Psoas muscle (tissue), 8 donors: ENCODE measurements at regions of chr19 and their contacts with region 1.

Region 1: DNA sequence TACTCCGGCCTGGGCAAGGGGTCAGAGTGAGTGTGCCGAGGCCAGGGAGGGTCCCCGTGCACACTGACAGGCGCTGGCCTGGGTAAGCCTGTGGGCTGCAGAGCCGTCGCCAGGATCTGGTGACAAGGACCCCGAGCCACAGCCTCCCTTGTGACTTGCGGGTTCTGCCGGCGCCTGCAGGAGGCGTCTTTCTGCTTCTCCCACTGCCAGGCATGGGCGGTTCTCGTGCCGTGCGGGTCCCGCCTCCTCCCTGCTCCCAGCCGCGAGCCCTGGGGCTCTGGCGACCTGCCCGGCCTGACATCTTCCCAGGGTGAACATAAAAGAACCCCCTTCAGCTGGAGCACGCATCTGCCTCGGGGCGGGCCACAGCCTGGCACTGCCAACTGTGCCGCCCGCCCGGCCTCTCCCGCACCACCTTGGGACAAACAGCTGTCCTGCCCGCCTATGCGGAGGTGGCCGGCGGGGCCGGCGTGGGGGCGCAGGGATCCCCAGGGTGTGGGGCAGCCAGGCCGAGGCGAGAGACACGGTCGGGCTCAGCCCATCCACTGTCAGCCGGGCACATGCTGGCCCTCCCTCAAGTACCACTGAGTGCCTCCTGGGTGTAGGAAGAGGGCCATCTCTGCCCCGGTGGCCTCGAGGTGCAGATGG is 1.5 kb upstream of the HCN2 start:
- DNase-seq: peak in 1 of 2 donors; percentile 61
- ATAC-seq: peak in 1 of 4 donors; percentile 9
- H3K4me3 ChIP-seq: no peak overlapping the region
- H3K27ac ChIP-seq: no peak overlapping the region
- H3K4me1 ChIP-seq: peaks cover 5% of the 10 kb centered on the region
- H3K27me3 ChIP-seq: peaks cover 0 to 40% (median 20%) of the 10 kb centered on the region in 3 donors
- CTCF ChIP-seq: no peak

Region 2: DNA sequence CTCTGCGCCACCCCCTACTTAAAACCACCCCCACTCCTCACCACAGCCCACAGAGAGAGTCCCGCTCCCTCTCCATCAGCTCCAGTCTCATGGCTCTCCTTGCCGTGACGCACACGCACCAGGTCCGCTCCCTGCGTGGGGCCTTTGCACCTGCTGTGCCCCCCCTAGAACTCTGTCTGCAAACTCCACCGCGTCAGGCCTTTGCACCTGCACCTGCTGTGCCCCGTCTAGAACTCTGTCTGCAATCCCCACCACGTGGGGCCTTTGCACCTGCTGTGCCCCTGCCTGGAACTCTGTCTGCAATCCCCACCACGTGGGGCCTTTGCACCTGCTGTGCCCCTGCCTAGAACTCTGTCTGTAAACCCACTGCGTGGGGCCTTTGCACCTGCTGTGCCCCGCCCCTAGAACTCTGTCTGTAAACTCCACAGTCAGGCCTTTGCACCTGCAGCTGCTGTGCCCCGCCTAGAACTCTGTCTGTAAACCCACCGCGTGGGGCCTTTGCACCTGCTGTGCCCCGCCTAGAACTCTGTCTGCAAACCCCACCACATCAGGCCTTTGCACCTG is 131.6 kb before region 1 on chr19:
- intact Hi-C with region 1: no loop called
- DNase-seq: peak in 1 of 2 donors; percentile 18
- ATAC-seq: no peak
- H3K4me3 ChIP-seq: no peak overlapping the region
- H3K27ac ChIP-seq: no peak overlapping the region
- H3K4me1 ChIP-seq: no peaks in the 10 kb centered on the region
- H3K27me3 ChIP-seq: peaks cover 0 to 11% (median 1%) of the 10 kb centered on the region in 3 donors
- CTCF ChIP-seq: no peak

Region 3: GRCh38 chr19:566403-566802 is 21.8 kb before region 1 on chr19:
- intact Hi-C with region 1: no loop called
- DNase-seq: no peak
- ATAC-seq: no peak
- H3K4me3 ChIP-seq: no peak overlapping the region
- H3K27ac ChIP-seq: no peak overlapping the region
- H3K4me1 ChIP-seq: peaks cover 5% of the 10 kb centered on the region
- H3K27me3 ChIP-seq: no peaks in the 10 kb centered on the region
- CTCF ChIP-seq: no peak

Region 4: DNA sequence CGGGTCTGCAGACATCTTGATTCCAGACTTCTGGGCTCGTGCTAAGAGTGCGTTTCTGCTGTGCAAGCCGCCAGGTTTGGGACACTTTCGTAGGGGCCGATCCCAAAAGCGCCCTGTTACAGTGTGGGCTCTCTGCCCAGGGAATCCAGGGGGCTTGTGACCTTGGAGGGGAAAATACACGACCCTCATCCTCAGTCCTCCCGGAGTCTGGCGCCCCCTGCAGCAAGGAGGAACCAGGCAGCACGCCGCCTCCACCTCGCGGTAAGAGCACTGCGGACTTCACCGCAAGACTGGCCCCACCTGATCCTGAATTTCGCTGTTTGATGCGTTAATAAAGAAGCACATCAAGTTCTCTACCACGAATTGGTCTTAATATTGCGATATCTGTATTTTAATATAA is 39.9 kb after region 1 on chr19:
- intact Hi-C with region 1: loop called in 1 of 2 experiments (anchors 5 kb)
- DNase-seq: no peak
- ATAC-seq: no peak
- H3K4me3 ChIP-seq: no peak overlapping the region
- H3K27ac ChIP-seq: no peak overlapping the region
- H3K4me1 ChIP-seq: peaks cover 9% of the 10 kb centered on the region
- H3K27me3 ChIP-seq: no peaks in the 10 kb centered on the region
- CTCF ChIP-seq: no peak

Region 5: DNA sequence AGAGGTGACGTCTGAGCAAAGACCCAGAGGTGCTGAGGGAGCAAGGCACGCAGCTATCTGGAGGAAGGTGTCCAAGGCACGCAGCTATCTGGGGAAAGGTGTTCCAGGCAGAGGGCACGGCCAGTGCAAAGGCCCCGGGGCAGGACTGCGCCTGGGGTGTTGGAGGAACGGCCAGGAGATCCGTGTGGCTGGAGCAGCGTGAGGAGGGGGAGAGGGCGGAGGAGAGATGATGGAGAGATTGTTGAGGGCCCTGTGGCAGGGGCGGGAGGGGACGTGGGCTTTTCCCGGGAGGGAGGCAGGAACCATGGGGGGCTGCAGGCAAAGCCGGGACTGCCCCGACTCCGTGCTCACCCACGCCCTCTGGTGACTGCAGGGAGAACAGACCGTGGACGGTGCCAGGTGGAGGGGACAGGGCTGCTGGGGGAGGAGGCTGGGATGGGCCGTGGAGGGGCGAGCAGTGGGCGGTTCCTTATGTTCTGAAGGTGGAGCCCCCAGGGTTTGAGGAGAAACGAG is 149.4 kb after region 1 on chr19:
- intact Hi-C with region 1: loop called in 1 of 2 experiments (anchors 10 kb)
- DNase-seq: peak in 1 of 2 donors; percentile 51
- ATAC-seq: peak in 3 of 4 donors; percentile 61 to 67 (median 66)
- H3K4me3 ChIP-seq: no peak overlapping the region
- H3K27ac ChIP-seq: no peak overlapping the region
- H3K4me1 ChIP-seq: no peaks in the 10 kb centered on the region
- H3K27me3 ChIP-seq: peaks cover 0 to 11% (median 4%) of the 10 kb centered on the region in 3 donors
- CTCF ChIP-seq: peak; percentile 43